GM12878 (cell line): ENCODE measurements at regions of chr19 and their contacts with region 1.

Region 1: GRCh38 chr19:46954993-46955812 is 64.4 kb upstream of the NPAS1 start:
- DNase-seq: no peak
- ATAC-seq: peak; percentile 73
- H3K4me3 ChIP-seq: peak overlapping the region; percentile 23; the same call in 1 of the 2 replicates
- H3K27ac ChIP-seq: peak overlapping the region; percentile 62
- H3K4me1 ChIP-seq: peaks cover 46% of the 10 kb centered on the region
- H3K27me3 ChIP-seq: no peaks in the 10 kb centered on the region
- CTCF ChIP-seq: no peak
- EP300 ChIP-seq: no peak
- POLR2A ChIP-seq: no peak
- RAD21 ChIP-seq: no peak

Region 2: GRCh38 chr19:46913852-46914430 is 41.3 kb before region 1 on chr19:
- CTCF ChIA-PET with region 1: no interaction called
- POLR2A ChIA-PET with region 1: interaction called, 3 read pairs
- RAD21 ChIA-PET with region 1: no interaction called
- SMC1A ChIA-PET with region 1: interaction called, 11 read pairs
- in situ Hi-C with region 1: no loop called
- intact Hi-C with region 1: no loop called
- DNase-seq: peak; percentile 16
- ATAC-seq: peak; percentile 78
- H3K4me3 ChIP-seq: peak overlapping the region; percentile 16; the same call in 1 of the 2 replicates
- H3K27ac ChIP-seq: peak overlapping the region; percentile 63
- H3K4me1 ChIP-seq: peaks cover 19% of the 10 kb centered on the region
- H3K27me3 ChIP-seq: no peaks in the 10 kb centered on the region
- CTCF ChIP-seq: no peak
- EP300 ChIP-seq: no peak
- POLR2A ChIP-seq: no peak
- RAD21 ChIP-seq: no peak

Region 3: DNA sequence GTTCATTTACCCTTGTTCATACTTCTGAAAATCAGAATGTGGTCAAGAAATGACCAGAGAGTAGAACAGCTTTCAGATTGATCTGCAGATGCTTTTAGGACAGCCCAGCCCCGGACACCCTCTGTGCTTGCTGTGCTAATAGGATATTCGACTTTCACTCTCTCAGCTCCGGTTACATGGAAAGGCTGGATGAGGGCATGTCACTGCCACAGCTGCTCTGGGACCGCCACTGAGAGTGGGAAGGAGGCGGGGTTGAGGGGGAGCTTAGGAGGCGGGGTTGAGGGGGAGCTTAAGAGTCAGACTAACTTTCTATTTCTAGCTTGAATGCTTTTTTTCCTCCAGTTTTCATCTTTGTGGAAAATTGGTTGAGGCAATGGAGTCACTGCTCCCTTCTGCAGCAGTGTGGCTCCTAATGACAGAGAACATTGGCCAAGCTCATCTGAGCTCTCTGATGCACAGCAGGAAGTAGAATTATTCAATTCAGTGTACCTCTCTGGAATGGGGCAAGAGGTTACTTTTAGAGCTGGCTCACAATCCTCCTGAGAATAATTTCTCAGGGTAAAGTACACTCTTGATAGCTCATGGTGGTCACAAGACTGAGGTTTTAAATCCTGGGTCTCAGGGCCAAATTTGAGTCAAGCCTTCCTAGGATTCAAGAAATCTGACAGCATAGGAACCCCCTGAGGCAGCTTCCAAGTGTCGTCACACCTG is 10.1 kb before region 1 on chr19:
- CTCF ChIA-PET with region 1: interaction called, 4 read pairs
- POLR2A ChIA-PET with region 1: interaction called, 7 read pairs
- RAD21 ChIA-PET with region 1: interaction called, 5 read pairs
- SMC1A ChIA-PET with region 1: interaction called, 21 read pairs
- in situ Hi-C with region 1: no loop called
- intact Hi-C with region 1: no loop called
- DNase-seq: no peak
- ATAC-seq: no peak
- H3K4me3 ChIP-seq: no peak overlapping the region
- H3K27ac ChIP-seq: no peak overlapping the region
- H3K4me1 ChIP-seq: peaks cover under 1% of the 10 kb centered on the region; the same call in 1 of the 2 replicates
- H3K27me3 ChIP-seq: no peaks in the 10 kb centered on the region
- CTCF ChIP-seq: no peak
- EP300 ChIP-seq: no peak
- POLR2A ChIP-seq: no peak
- RAD21 ChIP-seq: no peak

Region 4: GRCh38 chr19:47436712-47437401 is 481.7 kb after region 1 on chr19:
- CTCF ChIA-PET with region 1: no interaction called
- POLR2A ChIA-PET with region 1: no interaction called
- RAD21 ChIA-PET with region 1: no interaction called
- SMC1A ChIA-PET with region 1: no interaction called
- in situ Hi-C with region 1: no loop called
- intact Hi-C with region 1: no loop called
- DNase-seq: no peak
- ATAC-seq: peak; percentile 96
- H3K4me3 ChIP-seq: no peak overlapping the region
- H3K27ac ChIP-seq: no peak overlapping the region
- H3K4me1 ChIP-seq: no peaks in the 10 kb centered on the region; the same call in none of the 2 replicates
- H3K27me3 ChIP-seq: no peaks in the 10 kb centered on the region; a peak in 2 of 4 replicates
- CTCF ChIP-seq: peak; percentile 77 to 88 (median 85)
- EP300 ChIP-seq: no peak
- POLR2A ChIP-seq: no peak
- RAD21 ChIP-seq: peak; percentile 95